ENCODE measurements at regions of chr7 and their contacts with region 1.

Region 1: GRCh38 chr7:5677538-5678294 is 103.7 kb downstream of the RNF216 start:
- DNase-seq: peak; percentile 65
- H3K4me3 Mint-ChIP-seq: no peak overlapping the region
- H3K27ac Mint-ChIP-seq: no peak overlapping the region
- H3K4me1 Mint-ChIP-seq: no peaks in the 10 kb centered on the region
- H3K27me3 Mint-ChIP-seq: no peaks in the 10 kb centered on the region
- CTCF ChIP-seq: peak; percentile 80

Region 2: DNA sequence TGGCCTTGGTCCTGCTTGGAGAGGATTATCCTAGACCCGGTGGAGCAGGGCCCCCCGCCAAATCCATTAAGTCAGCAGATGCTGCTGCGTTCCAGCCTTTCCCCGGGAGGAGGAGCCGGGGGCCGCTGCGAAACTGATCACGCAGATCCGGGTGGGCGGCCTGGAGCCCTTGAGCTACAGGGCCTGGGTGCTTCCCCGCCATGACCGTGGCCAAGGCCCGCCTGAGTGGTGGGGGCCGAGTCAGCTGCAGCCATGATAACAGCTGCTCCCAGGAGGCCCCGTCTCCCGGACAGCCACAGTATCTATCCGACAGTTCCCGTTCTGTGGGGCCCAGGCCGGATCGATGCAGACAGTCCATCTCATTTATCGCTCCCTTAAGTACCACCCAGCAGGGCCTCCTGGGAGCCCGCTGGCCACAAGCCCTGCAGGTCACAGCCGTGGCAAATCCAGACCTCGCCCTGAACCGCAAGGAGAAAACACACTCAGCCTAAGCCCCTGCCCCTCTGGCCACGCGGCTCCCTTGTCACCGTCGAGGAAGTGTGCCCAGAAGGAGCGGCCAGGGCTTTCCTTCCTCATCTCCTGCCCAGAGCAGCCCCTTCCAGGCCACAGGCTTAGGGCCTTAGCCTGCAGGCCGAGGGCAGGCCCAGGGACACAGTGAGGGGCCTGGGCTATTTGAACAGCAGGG is 429.4 kb before region 1 on chr7:
- CTCF ChIA-PET with region 1: no interaction called
- intact Hi-C with region 1: loop called (anchors 10 kb)
- DNase-seq: no peak
- H3K4me3 Mint-ChIP-seq: no peak overlapping the region
- H3K27ac Mint-ChIP-seq: no peak overlapping the region
- H3K4me1 Mint-ChIP-seq: no peaks in the 10 kb centered on the region
- H3K27me3 Mint-ChIP-seq: peaks cover 38% of the 10 kb centered on the region
- CTCF ChIP-seq: no peak

Region 3: GRCh38 chr7:5387711-5388245 is 289.9 kb before region 1 on chr7:
- CTCF ChIA-PET with region 1: no interaction called
- intact Hi-C with region 1: no loop called
- DNase-seq: no peak
- H3K4me3 Mint-ChIP-seq: no peak overlapping the region
- H3K27ac Mint-ChIP-seq: no peak overlapping the region
- H3K4me1 Mint-ChIP-seq: peaks cover 19% of the 10 kb centered on the region
- H3K27me3 Mint-ChIP-seq: no peaks in the 10 kb centered on the region
- CTCF ChIP-seq: no peak

Region 4: DNA sequence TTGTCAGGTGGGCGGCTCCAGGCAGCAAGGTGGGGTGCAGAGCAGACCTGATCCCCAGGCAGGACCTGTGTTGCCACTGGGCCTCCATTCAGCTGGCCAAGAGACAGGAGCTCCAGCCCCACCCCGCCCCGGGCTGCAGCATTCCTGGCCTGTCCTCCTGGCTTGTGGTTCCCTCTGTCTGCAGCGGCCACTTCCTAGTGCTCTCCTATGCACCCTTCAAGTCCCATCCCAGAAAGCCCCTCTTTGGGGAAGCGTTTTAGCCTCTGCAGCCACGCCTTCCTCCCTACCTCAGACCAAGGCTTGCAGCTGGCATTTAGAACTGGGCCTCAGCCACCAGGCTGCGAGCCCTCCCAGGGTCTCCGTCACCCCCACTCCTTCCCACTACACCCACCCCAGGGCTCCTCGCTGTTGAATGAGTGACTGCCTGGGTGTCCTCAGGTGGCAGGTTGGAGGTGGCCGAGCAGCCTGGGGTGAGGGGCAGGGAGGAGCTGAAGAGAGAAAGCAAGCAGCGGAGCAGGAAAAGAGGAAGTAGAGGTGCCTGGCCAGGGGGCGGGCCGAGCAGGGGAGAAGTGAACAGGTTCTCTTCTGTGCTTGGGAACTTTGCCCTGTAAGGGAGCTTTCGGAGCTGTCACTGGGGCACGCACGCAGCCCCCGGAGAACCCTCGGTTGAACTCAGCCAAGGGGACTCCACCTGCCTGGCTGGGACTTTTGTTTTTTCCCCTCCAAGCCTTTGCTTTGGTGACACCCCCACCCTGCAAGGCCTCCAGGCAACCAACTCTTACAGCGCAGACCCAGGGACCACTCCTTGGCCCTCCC is 145.0 kb before region 1 on chr7:
- CTCF ChIA-PET with region 1: no interaction called
- intact Hi-C with region 1: no loop called
- DNase-seq: peak; percentile 95
- H3K4me3 Mint-ChIP-seq: peak overlapping the region; percentile 92
- H3K27ac Mint-ChIP-seq: peak overlapping the region; percentile 83
- H3K4me1 Mint-ChIP-seq: peaks cover 39% of the 10 kb centered on the region
- H3K27me3 Mint-ChIP-seq: no peaks in the 10 kb centered on the region
- CTCF ChIP-seq: no peak

Region 5: GRCh38 chr7:5572439-5572838 is 105.3 kb before region 1 on chr7:
- CTCF ChIA-PET with region 1: no interaction called
- intact Hi-C with region 1: no loop called
- DNase-seq: no peak
- H3K4me3 Mint-ChIP-seq: no peak overlapping the region
- H3K27ac Mint-ChIP-seq: no peak overlapping the region
- H3K4me1 Mint-ChIP-seq: peaks cover 9% of the 10 kb centered on the region
- H3K27me3 Mint-ChIP-seq: peaks cover 34% of the 10 kb centered on the region
- CTCF ChIP-seq: no peak

Region 6: DNA sequence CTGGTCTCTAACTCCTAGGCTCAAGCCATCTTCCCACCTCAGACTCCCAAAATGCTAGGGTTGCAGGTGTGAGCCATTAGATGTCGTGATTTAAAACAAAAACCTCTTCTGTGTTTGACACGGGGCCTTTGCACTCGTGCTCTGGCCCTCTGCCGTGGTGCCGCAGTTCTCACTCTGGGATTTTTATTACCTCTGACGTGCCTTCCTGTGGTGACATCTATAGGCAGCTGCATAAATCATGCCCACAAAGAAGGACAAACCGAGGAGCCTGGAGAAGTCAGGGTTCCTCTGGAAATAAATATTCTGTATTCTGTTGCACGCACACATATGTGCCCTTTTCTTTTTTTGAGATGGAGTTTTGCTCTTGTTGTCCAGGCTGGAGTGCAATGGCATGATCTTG is 177.0 kb after region 1 on chr7:
- CTCF ChIA-PET with region 1: no interaction called
- intact Hi-C with region 1: no loop called
- DNase-seq: no peak
- H3K4me3 Mint-ChIP-seq: no peak overlapping the region
- H3K27ac Mint-ChIP-seq: no peak overlapping the region
- H3K4me1 Mint-ChIP-seq: no peaks in the 10 kb centered on the region
- H3K27me3 Mint-ChIP-seq: no peaks in the 10 kb centered on the region
- CTCF ChIP-seq: no peak